Head of caudate nucleus (tissue), 42 donors: ENCODE measurements at regions of chr1 and their contacts with region 1.

Region 1: GRCh38 chr1:155323798-155324610 is 3.3 kb downstream of the RUSC1 start:
- DNase-seq: peak; percentile 86 to 99 (median 96)

Region 2: GRCh38 chr1:155277070-155277895 is 46.7 kb before region 1 on chr1 and contains the start of gene HCN3:
- intact Hi-C with region 1: loop called (anchors 5 kb)
- DNase-seq: peak; percentile 96 to 100 (median 99)